ENCODE measurements at regions of chr4 and their contacts with region 1.

Region 1: DNA sequence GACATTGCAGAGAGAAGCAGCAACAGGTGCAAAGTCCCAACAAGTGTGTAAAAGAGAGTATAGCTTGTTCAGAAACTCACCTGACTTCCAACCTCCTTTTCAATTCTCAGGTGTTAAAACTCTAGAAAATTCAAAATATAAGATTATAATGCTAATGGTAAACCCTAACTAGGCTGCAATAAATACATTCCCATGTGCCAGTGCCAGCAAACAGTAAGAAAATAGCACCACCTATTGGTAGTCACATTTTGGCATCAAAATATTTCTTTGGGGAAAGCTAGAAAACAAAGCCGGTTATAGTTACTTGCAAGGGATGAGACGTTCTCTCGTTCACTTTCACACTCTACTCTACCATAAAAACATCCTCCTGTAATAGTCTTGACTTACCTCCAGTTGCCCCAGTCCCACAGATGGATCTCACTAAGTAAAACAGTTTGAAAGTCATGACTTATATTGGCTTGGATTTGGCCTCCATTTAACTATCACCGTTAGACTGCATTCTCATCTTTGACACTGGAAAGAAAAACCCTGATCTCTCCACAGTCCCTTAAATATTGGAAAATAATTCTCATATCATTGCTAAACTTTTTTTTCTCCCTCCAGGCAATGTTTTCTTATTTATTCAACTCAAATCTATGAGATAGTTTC is 9.6 kb downstream of the BMP3 start:
- DNase-seq: peak; percentile 60
- H3K4me3 Mint-ChIP-seq: no peak overlapping the region
- H3K27ac Mint-ChIP-seq: no peak overlapping the region
- H3K4me1 Mint-ChIP-seq: peaks cover 27% of the 10 kb centered on the region
- H3K27me3 Mint-ChIP-seq: no peaks in the 10 kb centered on the region
- CTCF ChIP-seq: peak; percentile 82

Region 2: GRCh38 chr4:80454040-80454439 is 586.1 kb before region 1 on chr4:
- CTCF ChIA-PET with region 1: interaction called, 12 read pairs
- POLR2A ChIA-PET with region 1: interaction called, 3 read pairs
- intact Hi-C with region 1: loop called (anchors 10 kb)
- DNase-seq: peak; percentile 53
- H3K4me3 Mint-ChIP-seq: no peak overlapping the region
- H3K27ac Mint-ChIP-seq: peak overlapping the region; percentile 84
- H3K4me1 Mint-ChIP-seq: peaks cover 12% of the 10 kb centered on the region
- H3K27me3 Mint-ChIP-seq: no peaks in the 10 kb centered on the region
- CTCF ChIP-seq: no peak

Region 3: DNA sequence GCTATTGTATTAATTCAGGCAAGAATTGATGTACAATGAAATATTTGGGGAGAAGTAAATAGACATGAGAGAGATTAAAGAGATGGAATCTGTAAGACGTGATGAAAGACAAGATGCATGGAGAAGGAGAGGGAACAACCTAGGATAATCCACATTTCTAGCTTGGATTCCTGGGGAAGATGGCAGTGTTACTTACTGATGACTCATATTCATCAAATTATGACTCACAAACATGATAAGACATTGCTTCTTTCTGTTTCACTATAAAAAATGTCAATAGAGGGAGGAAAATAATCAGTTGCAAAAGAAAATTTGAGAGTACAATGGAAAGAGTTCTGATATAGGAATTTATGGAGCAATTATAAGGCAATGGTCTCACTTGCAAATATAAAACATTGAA is 113.7 kb before region 1 on chr4:
- CTCF ChIA-PET with region 1: no interaction called
- POLR2A ChIA-PET with region 1: no interaction called
- intact Hi-C with region 1: loop called (anchors 5 kb)
- DNase-seq: peak; percentile 23
- H3K4me3 Mint-ChIP-seq: no peak overlapping the region
- H3K27ac Mint-ChIP-seq: no peak overlapping the region
- H3K4me1 Mint-ChIP-seq: no peaks in the 10 kb centered on the region
- H3K27me3 Mint-ChIP-seq: no peaks in the 10 kb centered on the region
- CTCF ChIP-seq: no peak

Region 4: DNA sequence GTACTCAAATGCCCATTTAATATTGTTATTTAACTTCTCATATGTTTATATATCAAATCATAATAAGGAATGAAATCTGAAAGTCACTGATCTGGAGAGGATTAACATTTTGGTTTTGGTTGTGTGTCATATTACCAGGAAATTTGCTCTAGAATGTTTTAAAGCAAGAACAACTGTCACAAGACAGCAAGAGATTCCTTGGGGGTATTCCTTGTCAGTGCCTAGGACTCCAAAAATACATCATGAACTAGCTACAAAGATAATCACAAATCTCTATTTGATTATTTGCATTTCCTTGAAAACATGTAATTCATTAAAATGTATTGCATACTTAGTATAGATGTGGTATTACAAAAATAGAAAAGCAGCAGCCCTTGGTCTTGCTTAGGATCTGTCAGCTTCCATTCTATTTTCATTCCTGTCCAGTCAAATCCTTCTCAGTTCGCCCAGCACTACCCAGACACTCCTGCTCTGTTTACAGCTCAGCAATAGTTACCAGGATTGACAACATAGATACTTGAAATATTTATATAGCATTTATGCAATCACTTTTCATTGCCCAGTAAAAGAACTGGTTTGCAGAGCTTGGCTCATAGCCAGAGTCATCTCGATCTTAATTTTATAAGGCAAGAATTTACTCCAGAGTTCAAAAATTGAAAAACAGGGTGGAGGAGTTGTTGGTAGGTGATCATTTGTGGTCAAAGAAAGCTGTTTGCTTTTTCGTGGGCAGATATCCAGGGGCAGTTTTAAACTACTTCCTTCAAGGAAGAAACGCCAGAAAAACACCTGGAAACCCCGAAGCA is 18.8 kb before region 1 on chr4:
- CTCF ChIA-PET with region 1: interaction called, 15 read pairs
- POLR2A ChIA-PET with region 1: interaction called, 3 read pairs
- intact Hi-C with region 1: no loop called
- DNase-seq: no peak
- H3K4me3 Mint-ChIP-seq: no peak overlapping the region
- H3K27ac Mint-ChIP-seq: no peak overlapping the region
- H3K4me1 Mint-ChIP-seq: no peaks in the 10 kb centered on the region
- H3K27me3 Mint-ChIP-seq: no peaks in the 10 kb centered on the region
- CTCF ChIP-seq: no peak

Measured in MCF 10A (cell line).